SK-N-SH (cell line): ENCODE measurements at regions of chr6 and their contacts with region 1.

Region 1: DNA sequence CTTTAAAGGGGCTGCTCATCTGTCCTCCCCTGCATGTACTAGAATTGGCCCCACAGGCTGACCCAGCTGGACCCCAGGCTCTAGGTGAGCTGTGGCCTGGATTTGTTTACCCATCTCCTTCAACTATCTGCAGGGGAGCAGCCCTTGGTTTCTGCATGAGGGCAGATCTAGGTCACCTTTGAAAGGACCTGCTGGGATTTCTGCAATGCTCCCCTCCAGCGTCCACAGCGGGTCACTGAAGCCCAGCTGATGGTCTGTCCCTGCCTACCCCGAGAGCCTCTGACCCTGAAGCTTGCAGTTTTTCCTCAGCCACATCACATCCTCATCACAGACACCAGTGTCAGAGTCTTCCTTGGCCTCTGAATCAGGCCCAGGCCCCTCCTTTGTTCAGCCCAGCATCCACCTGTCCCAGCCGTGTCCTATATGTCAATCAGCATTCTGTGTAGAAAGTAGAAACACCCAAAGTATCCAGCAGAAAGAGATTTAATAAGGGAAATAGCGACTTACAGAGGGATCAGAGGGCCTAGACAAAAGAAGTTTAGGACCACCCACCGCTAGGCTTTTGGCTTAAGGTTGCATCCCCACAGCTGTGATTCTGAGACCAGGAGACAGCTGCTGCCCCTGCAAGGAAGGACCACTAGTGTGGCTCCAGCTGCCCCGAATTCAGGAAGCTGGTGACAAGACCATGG is 243.1 kb downstream of the LRFN2 start:
- DNase-seq: peak; percentile 12
- H3K4me3 ChIP-seq: no peak overlapping the region
- H3K27ac ChIP-seq: no peak overlapping the region; a peak in 1 of 4 replicates
- H3K4me1 ChIP-seq: peaks cover 0 to 67% of the 10 kb centered on the region in 2 experiments; a peak in 1 of 4 replicates
- H3K27me3 ChIP-seq: no peaks in the 10 kb centered on the region
- CTCF ChIP-seq: no peak
- EP300 ChIP-seq: no peak
- RAD21 ChIP-seq: no peak

Region 2: DNA sequence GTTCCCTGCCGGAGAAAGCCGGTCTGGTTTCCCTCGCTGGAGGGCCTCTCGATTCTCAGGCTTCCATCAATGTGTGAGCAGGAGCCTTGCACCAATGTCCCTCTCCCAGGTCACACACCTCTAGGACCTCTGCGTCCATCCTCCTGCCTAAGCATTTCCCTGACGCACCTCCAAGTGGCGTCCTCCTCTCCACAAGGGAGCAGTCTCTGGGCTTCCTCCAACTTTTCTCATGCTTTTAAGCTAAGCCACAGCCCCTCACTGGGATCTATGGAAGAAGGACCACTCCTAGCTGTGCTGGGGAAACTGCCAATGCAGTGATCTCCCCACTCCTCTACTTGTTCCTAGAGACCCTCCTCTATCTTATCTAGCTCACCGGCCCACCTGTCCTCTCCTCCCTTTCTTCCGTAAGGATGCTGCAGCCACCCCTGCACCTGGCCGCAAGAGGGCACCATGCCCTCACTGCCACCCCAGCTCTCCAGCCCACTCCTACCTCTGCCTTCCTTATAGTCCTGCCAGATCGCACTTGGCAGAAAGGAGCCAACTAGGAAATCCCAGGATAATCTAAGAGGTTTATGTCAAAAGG is 15.5 kb before region 1 on chr6:
- CTCF ChIA-PET with region 1: interaction called, 16 read pairs
- POLR2A ChIA-PET with region 1: no interaction called
- DNase-seq: peak; percentile 63
- H3K4me3 ChIP-seq: no peak overlapping the region; a peak in 1 of 4 replicates
- H3K27ac ChIP-seq: no peak overlapping the region
- H3K4me1 ChIP-seq: peaks cover 0 to 7% of the 10 kb centered on the region in 2 experiments; a peak in 1 of 4 replicates
- H3K27me3 ChIP-seq: no peaks in the 10 kb centered on the region
- CTCF ChIP-seq: peak; percentile 39; the same call in 1 of the 2 replicates
- EP300 ChIP-seq: no peak
- RAD21 ChIP-seq: peak; percentile 72